BJ (cell line): ENCODE measurements at regions of chr16 and their contacts with region 1.

Region 1: DNA sequence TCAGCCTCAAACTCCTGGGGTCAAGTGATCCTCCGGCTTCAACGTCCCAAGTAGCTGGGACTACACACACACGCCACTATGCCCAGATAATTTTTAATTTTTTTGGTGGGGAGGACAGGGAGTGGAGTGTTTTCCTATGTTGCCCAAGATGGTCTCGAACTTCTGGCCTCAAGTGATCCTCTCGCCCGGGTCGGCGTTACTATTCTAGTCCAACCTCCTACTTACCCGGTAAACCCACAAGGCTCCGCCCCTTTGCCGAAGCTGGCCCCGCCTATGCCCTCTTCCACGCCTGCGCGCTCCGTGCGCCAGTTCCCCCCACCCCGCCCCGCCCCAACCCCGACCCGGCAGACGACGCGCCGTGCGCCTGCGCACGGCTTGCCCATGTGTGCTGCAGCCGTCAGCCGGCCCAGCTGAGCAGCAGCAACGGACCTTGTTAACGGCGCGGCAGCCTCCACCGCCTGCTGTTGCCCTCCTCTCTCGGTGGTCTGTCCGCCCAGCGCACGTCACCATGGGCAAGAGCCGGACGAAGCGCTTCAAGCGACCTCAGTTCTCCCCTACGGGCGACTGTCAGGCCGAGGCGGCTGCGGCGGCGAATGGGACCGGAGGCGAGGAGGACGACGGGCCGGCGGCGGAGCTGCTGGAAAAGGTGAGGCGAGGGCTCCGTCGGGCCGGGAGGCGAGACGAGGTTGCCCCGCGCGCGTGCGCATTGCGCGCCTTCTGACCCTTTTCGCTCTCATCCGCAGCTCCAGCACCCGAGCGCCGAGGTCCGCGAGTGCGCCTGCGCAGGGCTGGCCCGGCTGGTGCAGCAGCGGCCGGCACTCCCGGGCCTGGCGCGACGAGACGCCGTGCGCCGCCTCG is at the start of gene HEATR3:
- DNase-seq: peak; percentile 56
- H3K4me3 ChIP-seq: peak within 1 kb of the TSS; percentile 98
- H3K27me3 ChIP-seq: no peaks in the 10 kb centered on the region
- CTCF ChIP-seq: no peak
- polyA plus RNA-seq, gene HEATR3: 13.0 and 18.5 TPM in 2 replicates

Region 2: GRCh38 chr16:50035468-50035992 is 30.3 kb before region 1 on chr16:
- CTCF ChIA-PET with region 1: interaction called, 6 read pairs
- POLR2A ChIA-PET with region 1: interaction called, 19 read pairs
- DNase-seq: no peak
- H3K4me3 ChIP-seq: no peak overlapping the region
- H3K27me3 ChIP-seq: no peaks in the 10 kb centered on the region
- CTCF ChIP-seq: no peak

Region 3: DNA sequence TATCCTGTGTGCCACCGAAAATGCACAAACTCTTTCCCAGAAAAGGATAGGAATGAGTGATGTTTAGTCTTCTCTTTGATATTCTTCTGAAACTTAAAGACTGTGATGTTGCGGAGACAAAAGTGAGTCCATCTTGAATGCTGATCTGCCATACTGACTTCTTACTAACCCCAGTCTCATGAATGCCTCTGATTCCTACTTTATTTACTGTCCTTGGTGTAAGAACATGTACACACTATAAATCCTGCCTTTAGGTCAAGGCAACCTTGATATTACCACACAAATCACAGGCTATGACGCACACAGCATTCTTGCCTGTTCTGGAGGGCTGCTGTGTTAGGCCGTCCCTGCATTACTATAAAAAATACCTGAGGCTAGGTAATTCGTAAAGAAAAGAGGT is 63.5 kb after region 1 on chr16:
- CTCF ChIA-PET with region 1: no interaction called
- POLR2A ChIA-PET with region 1: no interaction called
- DNase-seq: no peak
- H3K4me3 ChIP-seq: no peak overlapping the region
- H3K27me3 ChIP-seq: no peaks in the 10 kb centered on the region
- CTCF ChIP-seq: no peak

Region 4: GRCh38 chr16:50202926-50203624 is 137.2 kb after region 1 on chr16:
- CTCF ChIA-PET with region 1: interaction called, 148 read pairs
- POLR2A ChIA-PET with region 1: no interaction called
- DNase-seq: peak; percentile 99
- H3K4me3 ChIP-seq: 0 out of 2 replicates have a peak overlapping the region, but pooled peaks have one; percentile 7
- H3K27me3 ChIP-seq: no peaks in the 10 kb centered on the region
- CTCF ChIP-seq: no peak

Region 5: GRCh38 chr16:50313596-50314478 is 248.0 kb after region 1 on chr16:
- CTCF ChIA-PET with region 1: no interaction called
- POLR2A ChIA-PET with region 1: no interaction called
- DNase-seq: no peak
- H3K4me3 ChIP-seq: no peak overlapping the region
- H3K27me3 ChIP-seq: no peaks in the 10 kb centered on the region
- CTCF ChIP-seq: no peak